CD8-positive, alpha-beta T cell (primary cell): ENCODE measurements at regions of chr14 and their contacts with region 1.

Region 1: DNA sequence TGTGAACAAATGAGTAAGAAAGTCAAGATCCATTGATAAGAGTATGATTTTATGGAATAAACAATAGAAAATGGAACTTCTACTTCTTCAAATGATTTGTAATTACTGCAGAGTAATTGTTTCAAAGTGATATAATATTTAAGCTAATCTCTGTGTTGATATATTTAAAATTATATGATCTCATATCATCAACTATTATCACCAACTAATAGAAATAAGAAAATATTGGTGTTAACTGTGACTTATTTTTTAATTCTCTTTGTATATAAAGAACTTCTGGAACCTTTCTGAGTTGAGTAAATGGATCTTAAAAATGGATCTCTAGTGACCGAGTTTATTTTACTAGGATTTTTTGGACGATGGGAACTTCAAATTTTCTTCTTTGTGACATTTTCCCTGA is at the start of gene OR4L1:
- DNase-seq: no peak
- ATAC-seq: no peak
- H3K4me3 ChIP-seq: no peak within 1 kb of the TSS
- H3K4me3 Mint-ChIP-seq: no peak within 1 kb of the TSS
- H3K27ac ChIP-seq: no peak within 1 kb of the TSS
- H3K27ac Mint-ChIP-seq: no peak within 1 kb of the TSS
- H3K4me1 ChIP-seq: no peaks in the 10 kb centered on the region
- H3K4me1 Mint-ChIP-seq: no peaks in the 10 kb centered on the region
- H3K27me3 ChIP-seq: no peaks in the 10 kb centered on the region
- H3K27me3 Mint-ChIP-seq: peaks cover 11% of the 10 kb centered on the region
- CTCF ChIP-seq: no peak
- total RNA-seq, gene OR4L1: not detected

Region 2: DNA sequence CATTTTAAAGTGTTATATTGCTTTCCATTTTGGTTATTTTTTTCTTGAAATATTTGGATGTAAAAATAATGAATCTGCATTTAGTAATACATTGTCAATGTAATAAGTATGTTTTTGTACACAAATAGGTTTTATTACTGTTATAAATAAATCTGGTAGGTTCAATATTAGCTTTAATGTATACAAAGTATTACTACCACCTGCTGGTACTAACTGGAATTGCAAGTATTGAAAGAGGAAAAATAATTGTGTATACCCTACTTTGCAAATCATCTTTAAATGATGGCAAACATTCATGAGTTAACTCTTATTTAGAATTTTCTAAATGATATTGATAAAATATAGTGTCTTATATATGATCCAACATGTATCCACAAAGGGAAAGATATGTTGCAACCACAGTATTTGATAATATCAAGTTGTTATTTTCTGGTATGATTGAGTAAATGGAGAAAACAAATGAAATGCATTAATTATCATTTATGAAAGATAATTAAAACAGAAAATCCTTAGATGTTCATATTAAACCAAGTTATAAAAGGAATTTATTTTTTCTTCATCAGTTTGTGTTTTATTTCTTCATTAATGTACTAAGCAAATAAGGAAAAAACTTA is 181.6 kb before region 1 on chr14:
- CTCF ChIA-PET with region 1: no interaction called
- POLR2A ChIA-PET with region 1: no interaction called
- intact Hi-C with region 1: loop called in 1 of 2 experiments (anchors 10 kb)
- DNase-seq: peak in 1 of 9 experiments; percentile 16
- ATAC-seq: no peak
- H3K4me3 ChIP-seq: no peak overlapping the region
- H3K4me3 Mint-ChIP-seq: no peak overlapping the region
- H3K27ac ChIP-seq: no peak overlapping the region
- H3K27ac Mint-ChIP-seq: no peak overlapping the region
- H3K4me1 ChIP-seq: no peaks in the 10 kb centered on the region
- H3K4me1 Mint-ChIP-seq: no peaks in the 10 kb centered on the region
- H3K27me3 ChIP-seq: no peaks in the 10 kb centered on the region
- H3K27me3 Mint-ChIP-seq: peaks cover 3% of the 10 kb centered on the region
- CTCF ChIP-seq: peak; percentile 83

Region 3: GRCh38 chr14:19930617-19931016 is 129.1 kb before region 1 on chr14 and contains the start of gene OR4K1:
- CTCF ChIA-PET with region 1: no interaction called
- POLR2A ChIA-PET with region 1: no interaction called
- intact Hi-C with region 1: no loop called
- DNase-seq: no peak
- ATAC-seq: no peak
- H3K4me3 ChIP-seq: no peak within 1 kb of the TSS
- H3K4me3 Mint-ChIP-seq: no peak within 1 kb of the TSS
- H3K27ac ChIP-seq: no peak within 1 kb of the TSS
- H3K27ac Mint-ChIP-seq: no peak within 1 kb of the TSS
- H3K4me1 ChIP-seq: no peaks in the 10 kb centered on the region
- H3K4me1 Mint-ChIP-seq: no peaks in the 10 kb centered on the region
- H3K27me3 ChIP-seq: no peaks in the 10 kb centered on the region
- H3K27me3 Mint-ChIP-seq: no peaks in the 10 kb centered on the region
- CTCF ChIP-seq: no peak
- total RNA-seq, gene OR4K1: not detected